PC-9 (cell line): ENCODE measurements at regions of chr11 and their contacts with region 1.

Region 1: DNA sequence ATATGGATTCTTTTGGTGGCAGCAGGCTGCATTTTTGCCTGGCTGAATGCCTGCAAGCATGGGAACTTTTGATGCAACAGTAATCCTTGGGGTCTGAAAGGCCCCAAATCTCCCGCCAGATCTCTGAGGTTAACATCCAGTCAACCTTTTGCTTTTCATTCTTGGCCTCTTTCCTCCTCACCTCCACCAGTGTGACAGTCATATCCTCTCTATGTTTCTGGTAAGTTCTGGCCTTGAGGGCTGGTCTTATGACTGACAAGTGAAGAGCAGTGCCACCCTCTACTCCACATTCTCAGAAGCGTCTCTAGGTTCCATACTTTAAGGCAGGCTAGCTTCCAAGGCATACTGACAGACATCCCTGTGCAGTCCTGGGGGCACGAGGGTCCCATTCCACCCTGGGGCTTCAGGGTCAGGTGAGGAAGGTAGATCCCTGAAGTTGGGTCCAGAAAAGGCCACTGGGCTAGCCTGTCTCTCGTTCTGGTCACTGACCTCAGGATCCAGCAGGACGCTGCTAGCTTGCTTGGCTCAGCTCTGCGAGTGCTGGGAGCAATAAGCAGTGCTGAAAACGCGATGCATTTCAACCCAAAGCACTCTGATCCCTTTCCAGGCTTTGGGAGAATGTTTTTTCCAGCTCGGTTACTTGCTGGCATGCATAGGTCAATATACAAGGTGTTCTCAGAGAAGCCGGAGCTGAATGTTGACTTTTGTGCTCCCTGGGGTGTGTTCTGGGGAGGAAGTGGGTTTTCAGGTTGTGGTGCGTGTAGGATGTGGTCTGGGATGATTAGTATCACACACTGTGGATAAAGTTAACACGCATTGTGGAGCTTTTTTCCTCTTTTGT is 75.2 kb downstream of the PTPRJ start:
- DNase-seq: peak; percentile 81 to 100
- H3K4me3 ChIP-seq: peak overlapping the region; percentile 46; the same call in 1 of the 2 replicates
- H3K27ac ChIP-seq: peak overlapping the region; percentile 96
- H3K4me1 ChIP-seq: peaks cover 91% of the 10 kb centered on the region
- H3K27me3 ChIP-seq: no peaks in the 10 kb centered on the region
- CTCF ChIP-seq: no peak

Region 2: DNA sequence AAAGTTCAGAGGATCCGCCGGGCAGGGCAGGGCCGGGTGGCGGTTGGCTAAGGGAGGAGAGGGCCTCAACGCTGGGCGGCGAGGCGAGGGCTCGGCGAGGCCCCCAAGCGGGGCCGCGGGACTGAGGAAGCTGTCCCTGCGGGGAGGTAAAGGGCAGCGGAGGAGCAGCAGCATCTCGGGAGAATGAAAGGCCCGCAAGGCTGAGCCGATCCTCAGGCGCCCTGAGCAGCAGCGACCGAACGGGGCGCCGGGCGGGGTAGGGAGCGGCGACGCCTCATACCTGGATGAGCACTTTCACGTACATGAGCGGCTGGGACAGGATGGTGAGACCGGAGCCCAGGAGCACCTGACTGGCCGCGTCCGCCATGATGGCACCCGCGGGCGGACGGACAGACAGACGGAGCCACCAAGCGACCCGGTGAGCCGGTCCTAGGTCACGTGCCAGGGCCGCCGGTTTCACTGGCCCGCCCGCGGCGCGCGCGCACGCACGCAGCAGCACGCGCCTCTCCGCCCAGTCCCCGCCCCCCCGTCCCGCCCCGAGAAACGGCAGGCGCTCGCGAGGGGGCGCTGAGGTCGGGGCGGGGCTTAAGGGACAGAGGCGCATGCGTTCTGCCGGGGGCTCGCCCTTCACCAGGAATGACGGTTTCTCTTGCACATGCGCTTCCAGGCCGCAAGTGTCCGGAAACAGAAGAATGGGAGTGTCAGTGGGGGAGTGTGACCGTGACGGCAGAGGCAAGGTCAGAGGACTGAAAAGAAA is 413.2 kb before region 1 on chr11 and contains the start of gene MTCH2:
- CTCF ChIA-PET with region 1: no interaction called
- POLR2A ChIA-PET with region 1: no interaction called
- intact Hi-C with region 1: loop called (anchors 2 kb)
- DNase-seq: peak; percentile 86 to 98
- H3K4me3 ChIP-seq: peak within 1 kb of the TSS; percentile 94
- H3K27ac ChIP-seq: peak within 1 kb of the TSS; percentile 74
- H3K4me1 ChIP-seq: peaks cover 9% of the 10 kb centered on the region
- H3K27me3 ChIP-seq: no peaks in the 10 kb centered on the region
- CTCF ChIP-seq: peak; percentile 18; the same call in 1 of the 2 replicates
- total RNA-seq, gene MTCH2: 147 and 167 TPM in 2 replicates

Region 3: GRCh38 chr11:47863189-47863892 is 192.2 kb before region 1 on chr11:
- CTCF ChIA-PET with region 1: no interaction called
- POLR2A ChIA-PET with region 1: no interaction called
- intact Hi-C with region 1: loop called (anchors 5 kb)
- DNase-seq: no peak
- H3K4me3 ChIP-seq: no peak overlapping the region
- H3K27ac ChIP-seq: no peak overlapping the region
- H3K4me1 ChIP-seq: peaks cover 16% of the 10 kb centered on the region
- H3K27me3 ChIP-seq: no peaks in the 10 kb centered on the region
- CTCF ChIP-seq: no peak

Region 4: GRCh38 chr11:47991266-47991830 is 64.2 kb before region 1 on chr11:
- CTCF ChIA-PET with region 1: no interaction called
- POLR2A ChIA-PET with region 1: interaction called, 4 read pairs
- intact Hi-C with region 1: loop called (anchors 1 kb)
- DNase-seq: peak; percentile 70 to 73
- H3K4me3 ChIP-seq: no peak overlapping the region
- H3K27ac ChIP-seq: peak overlapping the region; percentile 62
- H3K4me1 ChIP-seq: peaks cover 59% of the 10 kb centered on the region
- H3K27me3 ChIP-seq: no peaks in the 10 kb centered on the region
- CTCF ChIP-seq: no peak

Region 5: DNA sequence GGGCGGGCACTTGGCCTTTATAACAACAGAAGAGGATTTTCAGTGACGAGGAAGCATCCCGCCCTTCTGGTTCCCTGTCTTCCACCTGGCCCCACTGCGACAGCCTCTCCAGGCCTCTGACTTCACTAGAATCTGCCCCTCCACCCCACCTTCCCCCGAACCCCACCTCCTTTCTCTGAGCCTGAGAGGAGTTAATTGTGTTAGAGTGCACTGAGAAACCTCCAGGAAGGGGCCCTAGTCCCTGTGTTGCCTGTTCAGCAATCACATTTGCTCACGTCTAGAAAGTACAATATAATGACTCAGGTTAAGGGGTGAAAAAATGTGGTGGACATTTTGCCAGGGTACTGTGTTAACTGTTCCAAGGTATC is 36.3 kb before region 1 on chr11:
- CTCF ChIA-PET with region 1: no interaction called
- POLR2A ChIA-PET with region 1: no interaction called
- intact Hi-C with region 1: loop called (anchors 5 kb)
- DNase-seq: peak in 1 of 2 experiments; percentile 46
- H3K4me3 ChIP-seq: no peak overlapping the region
- H3K27ac ChIP-seq: no peak overlapping the region
- H3K4me1 ChIP-seq: peaks cover 16% of the 10 kb centered on the region
- H3K27me3 ChIP-seq: no peaks in the 10 kb centered on the region
- CTCF ChIP-seq: no peak

Region 6: DNA sequence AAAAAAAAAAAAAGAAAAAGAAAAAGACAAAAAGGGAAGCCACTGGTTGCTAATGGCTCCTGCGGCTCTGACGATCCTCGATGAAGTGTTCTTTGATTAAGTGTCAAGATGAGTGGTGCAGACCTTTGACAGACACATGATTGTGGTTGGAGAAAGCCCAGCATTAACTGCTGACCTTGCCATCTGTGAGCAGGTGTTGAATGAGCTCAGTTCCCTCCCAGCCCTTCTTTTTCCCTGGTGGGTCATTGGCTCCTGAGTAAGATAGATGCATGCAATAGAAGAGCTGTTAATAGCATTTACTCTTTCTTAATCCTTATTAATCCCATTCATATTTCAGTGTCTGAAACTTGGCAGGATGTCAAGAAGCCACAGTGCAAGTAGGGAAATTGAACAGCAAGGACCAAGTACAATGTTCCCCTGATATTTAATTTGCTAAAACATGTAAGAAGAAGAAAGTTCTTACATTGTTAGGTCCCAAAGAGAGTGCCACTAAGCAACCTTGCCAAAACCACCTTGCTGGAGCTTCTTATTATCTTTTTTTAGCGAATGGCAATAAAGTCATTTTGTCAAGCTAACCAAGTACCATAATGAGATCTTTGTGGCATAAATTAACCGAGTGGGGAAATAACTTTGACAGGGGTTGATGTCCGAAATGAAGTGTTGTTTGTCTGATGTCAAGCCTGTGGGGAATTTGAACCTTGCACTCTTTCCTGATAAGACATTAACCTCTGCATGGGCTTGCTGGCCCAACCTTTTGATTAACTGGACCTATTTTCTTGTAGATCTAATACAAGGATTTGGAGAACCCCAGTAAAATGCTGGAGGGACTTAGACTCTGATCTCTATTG is 38.5 kb after region 1 on chr11:
- CTCF ChIA-PET with region 1: no interaction called
- POLR2A ChIA-PET with region 1: interaction called, 11 read pairs
- intact Hi-C with region 1: no loop called
- DNase-seq: no peak
- H3K4me3 ChIP-seq: no peak overlapping the region
- H3K27ac ChIP-seq: no peak overlapping the region
- H3K4me1 ChIP-seq: peaks cover 45% of the 10 kb centered on the region
- H3K27me3 ChIP-seq: no peaks in the 10 kb centered on the region
- CTCF ChIP-seq: no peak